ENCODE measurements at regions of chr3 and their contacts with region 1.

Region 1: DNA sequence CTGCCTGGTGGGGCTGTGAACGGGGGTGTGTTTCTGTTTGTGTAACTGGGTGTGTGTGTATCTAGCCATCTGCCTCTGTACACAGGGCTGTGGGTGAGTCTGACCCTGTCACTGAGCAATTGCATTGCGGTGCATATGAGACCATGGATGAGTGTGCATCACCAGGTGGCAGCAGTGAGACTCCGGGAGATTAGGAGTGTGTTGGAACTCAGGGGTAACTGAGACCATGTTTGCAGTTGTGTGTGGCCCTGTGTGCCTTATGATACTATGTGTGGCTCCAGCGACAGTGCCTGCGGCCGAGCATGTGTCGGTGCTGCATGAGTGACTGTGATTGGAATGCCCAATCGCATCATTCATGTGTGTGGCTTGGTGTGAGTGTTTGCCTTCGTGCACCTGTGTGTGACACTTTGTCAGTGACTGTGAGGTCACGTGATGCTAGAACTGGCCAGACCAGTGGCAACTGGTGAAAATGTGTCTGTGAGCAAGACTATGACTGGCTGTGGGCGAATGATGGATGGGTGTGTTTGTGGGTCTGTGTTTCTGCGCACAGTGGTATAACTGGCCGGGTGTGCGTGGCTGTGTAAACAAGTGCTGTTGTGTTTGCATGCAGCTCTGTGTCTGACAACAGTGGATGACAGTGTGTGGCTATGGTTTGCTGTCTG is 14.0 kb downstream of the VILL start:
- DNase-seq: peak; percentile 74
- H3K4me3 Mint-ChIP-seq: no peak overlapping the region
- H3K27ac Mint-ChIP-seq: peak overlapping the region; percentile 63
- H3K4me1 Mint-ChIP-seq: peaks cover 11% of the 10 kb centered on the region
- H3K27me3 Mint-ChIP-seq: no peaks in the 10 kb centered on the region

Region 2: DNA sequence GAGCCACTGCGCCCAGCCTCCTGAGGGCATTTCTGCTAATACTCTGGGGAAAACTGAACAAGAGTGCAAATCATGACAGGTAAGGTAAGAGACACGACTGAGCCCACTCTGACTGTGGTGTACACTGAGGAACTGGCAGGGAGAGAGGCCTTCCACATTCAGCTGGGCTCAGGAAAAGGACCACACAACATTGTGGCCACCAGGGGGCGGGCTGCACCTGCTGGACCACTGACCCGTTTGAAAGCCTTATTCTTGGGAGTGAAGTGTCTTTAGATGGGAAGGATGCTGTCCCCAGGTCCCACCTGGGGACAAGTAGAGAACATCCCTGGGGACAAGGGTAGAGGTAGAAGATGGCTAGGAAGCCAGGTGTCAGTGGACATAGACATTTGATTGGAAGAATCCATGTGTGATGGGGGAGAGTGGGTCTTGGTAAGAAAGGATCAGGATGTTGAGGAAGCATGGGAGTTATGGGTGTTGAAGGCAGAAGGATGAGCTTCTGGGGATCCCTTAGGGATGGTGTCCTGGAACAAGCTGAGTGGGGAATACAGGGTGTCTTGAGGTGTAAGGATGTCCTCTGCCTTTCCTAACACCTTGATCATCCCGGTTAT is 149.1 kb before region 1 on chr3:
- CTCF ChIA-PET with region 1: interaction called, 23 read pairs
- intact Hi-C with region 1: no loop called
- DNase-seq: peak; percentile 88
- H3K4me3 Mint-ChIP-seq: no peak overlapping the region
- H3K27ac Mint-ChIP-seq: no peak overlapping the region
- H3K4me1 Mint-ChIP-seq: peaks cover 6% of the 10 kb centered on the region
- H3K27me3 Mint-ChIP-seq: no peaks in the 10 kb centered on the region

Measured in activated naive CD4-positive, alpha-beta T cell treated with anti-CD3 and anti-CD28 coated beads for 36 hours (primary cell).